Activated CD8-positive, alpha-beta T cell treated with anti-CD3 and anti-CD28 coated beads for 36 hours (primary cell): ENCODE measurements at regions of chr5 and their contacts with region 1.

Region 1: DNA sequence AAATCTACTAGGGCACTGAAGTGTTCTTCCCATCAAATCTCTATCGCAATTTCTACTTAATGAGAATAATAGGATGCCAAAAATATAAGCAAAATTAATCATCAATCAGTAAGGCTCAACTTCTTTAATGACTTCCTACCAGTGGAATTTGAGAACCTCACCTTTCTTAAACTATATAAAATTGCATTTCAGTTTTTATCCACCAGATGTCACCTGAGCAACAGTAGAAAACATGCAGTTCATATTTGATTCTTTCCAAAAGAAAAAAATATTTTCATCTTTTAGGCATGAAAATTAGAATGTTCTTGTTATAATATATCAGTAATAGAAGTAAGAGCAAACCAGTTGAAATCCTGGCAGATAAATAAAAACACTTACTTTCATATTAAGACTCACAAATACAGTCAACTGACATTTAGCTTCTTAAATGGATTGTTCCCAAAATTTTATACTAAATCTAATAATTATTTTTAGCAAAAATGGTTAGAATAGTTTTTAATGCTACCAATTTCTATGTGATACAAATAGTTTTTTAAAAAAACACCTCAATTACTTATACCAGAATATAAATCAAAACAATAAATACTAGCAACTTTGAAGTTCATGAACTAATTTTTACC is 13.4 kb upstream of the CCDC112 start:
- DNase-seq: no peak
- ATAC-seq: no peak
- H3K4me3 Mint-ChIP-seq: no peak overlapping the region
- H3K27ac Mint-ChIP-seq: no peak overlapping the region
- H3K4me1 Mint-ChIP-seq: no peaks in the 10 kb centered on the region
- H3K27me3 Mint-ChIP-seq: peaks cover 16% of the 10 kb centered on the region
- CTCF ChIP-seq: peak; percentile 82

Region 2: DNA sequence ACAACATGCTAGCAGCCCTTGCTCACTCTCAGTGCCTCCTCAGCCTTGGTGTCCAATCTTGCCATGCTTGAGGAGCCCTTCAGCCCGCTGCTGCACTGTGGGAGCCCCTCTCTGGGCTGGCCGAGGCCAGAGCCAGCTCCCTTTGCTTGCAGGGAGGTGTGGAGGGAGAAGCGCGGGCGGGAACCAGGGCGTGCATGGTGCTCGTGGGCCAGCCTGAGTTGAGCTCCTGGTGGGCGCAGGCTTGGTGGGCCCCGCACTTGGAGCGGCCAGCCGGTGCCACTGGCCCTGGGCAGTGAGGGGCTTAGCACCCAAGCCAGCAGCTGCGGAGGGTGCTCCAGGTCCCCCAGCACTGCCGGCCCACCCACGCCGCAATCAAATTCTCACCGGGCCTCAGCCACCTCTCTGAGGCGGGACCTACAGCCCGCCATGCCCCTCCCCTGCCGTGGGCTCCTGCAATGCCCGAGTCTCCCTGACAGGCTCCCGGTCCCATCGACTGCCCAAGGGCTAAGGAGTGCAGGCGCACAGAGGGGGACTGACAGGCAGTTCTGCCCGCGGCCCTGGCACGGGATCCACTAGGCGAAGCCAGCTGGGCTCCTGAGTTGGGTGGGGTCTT is 614.5 kb before region 1 on chr5:
- CTCF ChIA-PET with region 1: no interaction called
- POLR2A ChIA-PET with region 1: no interaction called
- intact Hi-C with region 1: no loop called
- DNase-seq: no peak
- ATAC-seq: no peak
- H3K4me3 Mint-ChIP-seq: no peak overlapping the region
- H3K27ac Mint-ChIP-seq: no peak overlapping the region
- H3K4me1 Mint-ChIP-seq: no peaks in the 10 kb centered on the region
- H3K27me3 Mint-ChIP-seq: no peaks in the 10 kb centered on the region
- CTCF ChIP-seq: no peak

Region 3: GRCh38 chr5:115296124-115297022 is 13.5 kb before region 1 on chr5 and contains the start of gene CCDC112:
- CTCF ChIA-PET with region 1: interaction called, 10 read pairs
- POLR2A ChIA-PET with region 1: no interaction called
- intact Hi-C with region 1: no loop called
- DNase-seq: peak; percentile 81
- ATAC-seq: peak; percentile 85
- H3K4me3 Mint-ChIP-seq: peak within 1 kb of the TSS; percentile 73
- H3K27ac Mint-ChIP-seq: no peak within 1 kb of the TSS
- H3K4me1 Mint-ChIP-seq: peaks cover 4% of the 10 kb centered on the region
- H3K27me3 Mint-ChIP-seq: peaks cover 10% of the 10 kb centered on the region
- CTCF ChIP-seq: no peak
- total RNA-seq, gene CCDC112: 1.5 to 2.4 TPM

Region 4: GRCh38 chr5:115579747-115580173 is 269.9 kb after region 1 on chr5:
- CTCF ChIA-PET with region 1: interaction called, 127 read pairs
- POLR2A ChIA-PET with region 1: interaction called, 3 read pairs
- intact Hi-C with region 1: no loop called
- DNase-seq: no peak
- ATAC-seq: no peak
- H3K4me3 Mint-ChIP-seq: no peak overlapping the region
- H3K27ac Mint-ChIP-seq: no peak overlapping the region
- H3K4me1 Mint-ChIP-seq: no peaks in the 10 kb centered on the region
- H3K27me3 Mint-ChIP-seq: no peaks in the 10 kb centered on the region
- CTCF ChIP-seq: no peak

Region 5: GRCh38 chr5:115586601-115587048 is 276.8 kb after region 1 on chr5:
- CTCF ChIA-PET with region 1: interaction called, 16 read pairs
- POLR2A ChIA-PET with region 1: no interaction called
- intact Hi-C with region 1: loop called (anchors 2 kb)
- DNase-seq: no peak
- ATAC-seq: no peak
- H3K4me3 Mint-ChIP-seq: no peak overlapping the region
- H3K27ac Mint-ChIP-seq: no peak overlapping the region
- H3K4me1 Mint-ChIP-seq: no peaks in the 10 kb centered on the region
- H3K27me3 Mint-ChIP-seq: no peaks in the 10 kb centered on the region
- CTCF ChIP-seq: peak; percentile 68

Region 6: DNA sequence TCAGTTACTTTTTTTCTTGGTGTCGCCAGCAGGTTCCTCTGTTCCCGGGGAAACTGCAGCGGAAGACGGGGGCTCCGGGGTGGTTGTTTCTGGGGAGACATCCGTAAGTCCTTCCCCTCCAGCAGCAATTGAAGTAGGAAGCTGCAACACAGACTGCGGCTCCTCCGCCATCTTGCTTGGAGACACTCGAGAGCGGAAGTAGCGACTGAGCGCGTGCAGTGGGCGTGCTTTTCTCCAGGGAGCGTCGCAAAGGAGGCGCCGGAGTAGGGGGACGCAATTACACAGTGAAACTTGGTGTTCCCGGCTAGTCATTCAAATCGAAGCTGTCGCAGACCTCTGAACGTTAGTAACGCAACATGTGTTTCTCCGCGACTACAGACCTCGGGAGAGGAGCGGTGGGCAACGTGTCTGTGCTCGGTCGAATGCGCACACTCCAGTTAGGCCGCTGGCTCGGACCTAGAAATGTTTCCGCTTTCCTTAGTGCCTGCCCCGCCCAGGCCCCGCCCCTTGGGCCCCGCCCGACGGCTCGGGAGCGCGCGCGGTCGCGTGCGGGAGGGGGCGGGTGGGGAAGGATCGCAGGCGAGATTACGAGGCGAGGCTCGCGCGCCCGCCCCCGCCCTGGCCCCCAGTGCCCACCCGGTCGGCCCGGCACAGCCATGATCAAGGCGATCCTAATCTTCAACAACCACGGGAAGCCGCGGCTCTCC is 531.7 kb after region 1 on chr5 and contains the starts of genes AP3S1 and ATG12:
- CTCF ChIA-PET with region 1: no interaction called
- POLR2A ChIA-PET with region 1: no interaction called
- intact Hi-C with region 1: loop called (anchors 10 kb)
- DNase-seq: peak; percentile 95
- ATAC-seq: peak; percentile 90
- H3K4me3 Mint-ChIP-seq: peak within 1 kb of the TSS; percentile 95
- H3K27ac Mint-ChIP-seq: peak within 1 kb of the TSS; percentile 100
- H3K4me1 Mint-ChIP-seq: peaks cover 49% of the 10 kb centered on the region
- H3K27me3 Mint-ChIP-seq: no peaks in the 10 kb centered on the region
- CTCF ChIP-seq: no peak
- total RNA-seq, gene AP3S1: 102 to 107 TPM
- total RNA-seq, gene ATG12: 37.2 to 37.8 TPM